Activated T-helper 1 cell treated with anti-CD3 and anti-CD28 coated beads, Interleukin-12 subunit alpha, Interleukin-12 subunit beta, Interleukin-2, Interleukin-4 antibody, amounts not matched to agents 30 ng/mL and 10 ng/mL and 1 ng/mL, durations not matched to agents 14 hours and 24 hours and 36 hours (primary cell): ENCODE measurements at regions of chr4 and their contacts with region 1.

Region 1: DNA sequence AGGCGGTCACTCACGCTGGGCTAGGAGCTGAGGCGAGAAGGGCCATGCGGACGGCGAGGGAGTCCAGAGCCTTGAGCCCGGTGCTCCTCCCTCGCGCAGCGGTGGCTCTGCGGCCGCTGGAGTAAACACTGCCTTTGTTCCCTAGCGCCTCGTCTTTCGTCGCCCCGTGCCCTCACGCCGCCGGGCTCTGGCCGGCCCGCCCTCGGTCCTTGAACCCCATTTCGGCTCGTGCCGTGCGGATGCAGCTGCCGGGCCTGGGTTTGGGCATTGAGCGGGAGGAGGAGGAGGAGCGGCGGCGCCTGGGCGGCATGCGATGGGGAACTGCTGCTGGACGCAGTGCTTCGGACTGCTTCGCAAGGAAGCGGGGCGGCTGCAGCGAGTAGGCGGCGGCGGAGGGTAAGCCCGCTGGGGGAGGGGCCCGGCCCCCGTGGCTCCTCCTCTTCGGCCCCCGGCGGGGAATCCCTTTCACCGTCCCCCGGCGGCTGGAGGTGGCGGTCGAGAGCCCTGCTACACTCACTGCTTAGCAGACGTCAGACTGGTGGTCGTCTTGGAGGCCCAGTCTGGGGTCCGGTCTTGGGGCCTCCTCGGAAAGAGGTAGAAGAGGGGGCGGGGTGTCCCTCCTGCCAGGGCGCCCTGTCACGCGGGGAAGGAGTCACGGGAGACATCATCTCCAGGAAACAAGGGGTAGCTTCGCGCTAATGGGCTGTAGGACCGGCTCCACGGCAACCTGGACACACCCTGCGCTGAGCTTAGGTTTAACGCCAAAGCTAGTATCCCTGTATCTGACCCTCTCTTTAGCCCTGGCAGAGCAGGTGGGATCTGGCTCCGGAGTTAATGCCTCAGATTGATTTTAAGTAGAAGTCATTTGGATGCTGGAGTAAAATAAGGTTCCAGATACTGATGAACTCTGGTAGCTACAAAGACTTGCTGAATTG is at the start of gene AP1AR:
- DNase-seq: peak; percentile 80
- H3K4me3 Mint-ChIP-seq: peak within 1 kb of the TSS; percentile 91
- H3K27ac Mint-ChIP-seq: peak within 1 kb of the TSS; percentile 98
- H3K4me1 Mint-ChIP-seq: peaks cover 34% of the 10 kb centered on the region
- H3K27me3 Mint-ChIP-seq: peaks cover 16% of the 10 kb centered on the region
- total RNA-seq, gene AP1AR: 25.1 and 26.6 TPM in 2 replicates

Region 2: DNA sequence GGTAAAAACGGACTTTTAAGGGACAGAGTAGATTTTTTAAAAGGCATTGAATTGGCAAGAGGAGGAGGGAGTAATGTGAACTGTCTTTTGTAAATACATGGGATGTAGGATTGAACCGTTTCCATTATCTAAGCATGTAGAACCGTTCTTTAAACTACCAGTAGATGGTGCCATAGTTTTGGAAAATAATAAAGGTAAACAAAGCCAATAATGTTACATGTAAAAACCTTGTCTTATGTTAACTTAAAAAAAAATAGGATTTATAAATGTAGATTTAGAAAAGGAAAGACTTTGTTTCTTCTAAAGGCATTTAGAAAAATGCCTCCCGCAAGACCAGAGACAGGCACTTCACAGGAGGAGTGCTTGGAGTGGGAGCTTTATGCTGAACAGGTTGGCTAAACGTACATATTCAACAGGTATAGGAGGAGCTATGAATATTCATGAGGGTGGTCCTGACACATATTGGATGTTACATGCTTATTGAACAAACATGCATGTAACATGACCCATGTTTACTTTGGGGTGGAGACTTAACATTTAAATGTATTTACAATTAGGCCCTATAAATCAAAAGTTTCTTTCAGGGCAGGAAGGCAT is 132.2 kb before region 1 on chr4:
- intact Hi-C with region 1: loop called (anchors 1 kb)
- DNase-seq: no peak
- H3K4me3 Mint-ChIP-seq: no peak overlapping the region
- H3K27ac Mint-ChIP-seq: no peak overlapping the region
- H3K4me1 Mint-ChIP-seq: peaks cover 20% of the 10 kb centered on the region
- H3K27me3 Mint-ChIP-seq: peaks cover 22% of the 10 kb centered on the region

Region 3: GRCh38 chr4:112145326-112145819 is 86.7 kb before region 1 on chr4 and contains the start of gene FAM241A:
- intact Hi-C with region 1: loop called (anchors 1 kb)
- DNase-seq: peak; percentile 80
- H3K4me3 Mint-ChIP-seq: peak within 1 kb of the TSS; percentile 98
- H3K27ac Mint-ChIP-seq: peak within 1 kb of the TSS; percentile 97
- H3K4me1 Mint-ChIP-seq: peaks cover 47% of the 10 kb centered on the region
- H3K27me3 Mint-ChIP-seq: no peaks in the 10 kb centered on the region
- total RNA-seq, gene FAM241A: 6.7 and 7.1 TPM in 2 replicates

Region 4: DNA sequence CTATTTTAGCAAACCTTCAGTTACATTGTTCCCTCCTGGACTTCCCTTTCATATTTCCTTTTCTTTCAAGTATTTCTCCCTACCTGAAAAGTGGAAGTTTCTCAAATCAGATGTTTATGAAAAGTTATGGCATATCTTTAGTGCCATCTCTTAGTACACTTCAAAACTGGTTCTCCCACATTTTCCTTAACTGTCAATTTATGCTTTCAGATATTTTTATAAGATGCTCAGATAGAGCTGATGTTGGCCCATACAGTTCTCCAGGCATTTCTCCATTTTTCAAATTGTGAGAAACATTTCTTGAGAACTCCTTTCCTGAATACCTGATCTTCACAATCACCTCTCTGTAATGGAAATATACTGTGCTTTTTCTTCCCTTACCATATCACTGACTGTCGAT is 33.0 kb before region 1 on chr4:
- intact Hi-C with region 1: loop called (anchors 1 kb)
- DNase-seq: no peak
- H3K4me3 Mint-ChIP-seq: no peak overlapping the region
- H3K27ac Mint-ChIP-seq: peak overlapping the region; percentile 11
- H3K4me1 Mint-ChIP-seq: peaks cover 19% of the 10 kb centered on the region
- H3K27me3 Mint-ChIP-seq: peaks cover 2% of the 10 kb centered on the region

Region 5: DNA sequence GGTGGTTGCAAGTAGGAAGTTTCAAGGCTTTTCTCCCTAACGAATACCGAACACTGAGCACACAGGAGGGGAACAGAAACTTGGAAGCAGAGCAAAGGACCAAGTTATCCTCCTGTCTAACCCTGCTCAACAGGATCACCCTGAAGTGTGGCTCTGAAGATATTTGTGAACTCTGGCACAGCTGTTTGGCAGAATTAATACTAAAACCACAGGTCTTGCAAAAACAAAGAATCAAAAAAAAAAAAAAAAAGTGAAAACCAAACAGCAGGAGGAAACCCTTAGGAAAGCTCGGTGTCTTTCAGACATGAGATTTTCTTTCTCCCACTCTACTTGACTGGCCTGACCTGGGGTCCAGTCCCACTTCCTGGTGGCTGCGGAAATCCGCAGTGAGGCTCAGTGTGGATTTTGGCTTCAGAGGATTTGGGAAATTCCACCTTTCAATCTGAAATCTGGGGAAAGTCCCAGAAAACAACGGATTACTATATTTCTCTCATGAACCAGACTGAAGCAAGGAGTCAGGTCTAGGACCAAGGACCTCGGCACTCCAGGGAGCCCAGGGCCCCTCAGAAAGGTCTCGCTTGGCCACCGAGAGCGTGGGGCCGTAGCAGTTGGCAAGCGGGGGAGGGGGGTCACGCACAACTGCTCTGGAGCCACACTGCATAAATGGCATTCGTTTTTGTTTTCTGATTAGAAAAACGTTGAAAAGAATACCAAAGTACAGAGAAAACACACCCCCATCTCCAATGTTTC is 52.8 kb after region 1 on chr4:
- intact Hi-C with region 1: loop called (anchors 1 kb)
- DNase-seq: no peak
- H3K4me3 Mint-ChIP-seq: peak overlapping the region; percentile 87
- H3K27ac Mint-ChIP-seq: peak overlapping the region; percentile 95
- H3K4me1 Mint-ChIP-seq: peaks cover 91% of the 10 kb centered on the region
- H3K27me3 Mint-ChIP-seq: no peaks in the 10 kb centered on the region

Region 6: DNA sequence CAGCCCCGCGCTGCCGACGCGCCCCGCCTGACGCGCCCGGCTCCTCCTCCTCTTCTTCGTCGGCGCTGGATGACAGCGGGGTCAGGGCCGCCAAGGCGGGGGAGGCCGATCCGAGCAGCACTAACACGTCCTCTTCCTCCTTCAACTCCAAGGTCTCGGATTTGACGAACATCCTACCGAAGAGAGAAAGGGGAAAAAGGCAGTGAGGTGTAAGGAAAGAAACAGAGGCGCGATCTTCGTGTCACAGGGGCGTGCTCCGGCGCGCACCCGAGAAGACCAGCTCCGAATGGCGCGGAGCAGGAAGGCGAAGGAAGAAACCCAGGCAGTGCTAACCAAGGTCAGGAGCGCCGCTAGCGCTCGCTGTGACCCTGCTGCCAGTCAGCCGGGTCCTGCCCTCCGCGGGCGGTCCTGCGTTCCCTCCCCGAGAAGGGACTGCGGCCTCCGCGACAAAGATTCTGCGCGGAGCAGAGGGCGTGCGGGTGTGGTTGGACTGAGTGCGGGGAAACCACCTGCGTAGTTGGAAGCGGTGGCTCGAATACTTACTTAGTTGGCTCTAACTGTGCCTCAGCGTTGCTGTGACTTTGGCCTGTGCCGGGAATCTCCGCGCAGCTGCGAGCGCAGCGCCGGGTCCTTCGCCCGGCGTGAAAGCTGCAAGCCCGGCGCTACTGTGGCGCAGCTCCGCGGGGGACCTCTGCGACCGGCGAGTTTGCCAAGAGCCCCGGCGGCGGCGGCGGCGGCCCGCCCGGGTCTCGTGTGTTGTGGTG is 283.4 kb after region 1 on chr4:
- intact Hi-C with region 1: loop called (anchors 2 kb)
- DNase-seq: peak; percentile 49
- H3K4me3 Mint-ChIP-seq: peak overlapping the region; percentile 95
- H3K27ac Mint-ChIP-seq: peak overlapping the region; percentile 93
- H3K4me1 Mint-ChIP-seq: peaks cover 79% of the 10 kb centered on the region
- H3K27me3 Mint-ChIP-seq: peaks cover 82% of the 10 kb centered on the region